ENCODE measurements at regions of chr19 and their contacts with region 1.

Region 1: GRCh38 chr19:6737284-6738046 is at the start of gene GPR108:
- DNase-seq: peak; percentile 100
- ATAC-seq: peak; percentile 81
- H3K4me3 Mint-ChIP-seq: peak within 1 kb of the TSS; percentile 89
- H3K27ac Mint-ChIP-seq: peak within 1 kb of the TSS; percentile 98
- H3K4me1 Mint-ChIP-seq: peaks cover 39% of the 10 kb centered on the region
- H3K27me3 Mint-ChIP-seq: no peaks in the 10 kb centered on the region
- total RNA-seq, gene GPR108: 58.8 to 59.9 TPM

Region 2: GRCh38 chr19:6372594-6373095 is 364.8 kb before region 1 on chr19 and contains the start of gene ALKBH7:
- CTCF ChIA-PET with region 1: no interaction called
- POLR2A ChIA-PET with region 1: no interaction called
- intact Hi-C with region 1: loop called in 1 of 2 experiments (anchors 1 kb)
- DNase-seq: peak; percentile 98
- ATAC-seq: peak; percentile 84
- H3K4me3 Mint-ChIP-seq: peak within 1 kb of the TSS; percentile 80
- H3K27ac Mint-ChIP-seq: peak within 1 kb of the TSS; percentile 92
- H3K4me1 Mint-ChIP-seq: peaks cover 11% of the 10 kb centered on the region
- H3K27me3 Mint-ChIP-seq: no peaks in the 10 kb centered on the region
- total RNA-seq, gene ALKBH7: 22.8 to 44.7 TPM

Region 3: DNA sequence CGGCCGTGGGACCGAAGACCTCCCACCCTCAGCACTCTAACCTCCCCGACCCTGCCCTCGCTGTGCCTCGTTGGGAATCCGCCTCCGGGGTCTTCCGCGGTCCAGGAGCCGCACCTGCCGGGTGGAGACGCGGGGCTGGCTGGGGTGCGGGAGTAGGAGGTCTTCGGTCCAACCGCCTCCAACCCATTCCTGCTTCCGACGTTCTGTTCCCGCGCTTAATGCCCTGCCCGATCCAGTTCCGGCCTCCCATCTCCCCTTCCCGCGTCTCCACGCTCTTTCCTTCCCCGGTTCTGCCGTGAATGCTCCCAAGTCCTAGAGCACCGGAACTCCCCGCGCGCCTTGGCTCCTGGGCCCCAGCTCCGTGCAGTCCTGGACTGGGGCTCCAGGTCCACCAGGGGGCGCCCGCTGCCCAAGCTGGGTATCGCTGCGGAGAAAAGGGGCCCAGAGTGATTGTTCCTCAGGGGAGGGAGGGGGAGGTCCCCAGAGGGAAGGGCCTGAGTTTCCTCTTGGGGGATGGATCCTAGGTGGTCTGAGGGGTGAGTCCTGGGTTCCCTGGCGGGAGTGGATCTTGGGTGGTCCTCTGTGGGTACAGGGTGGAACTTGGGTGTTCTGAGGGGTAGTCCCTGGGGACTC is 220.7 kb before region 1 on chr19:
- CTCF ChIA-PET with region 1: interaction called, 8 read pairs
- POLR2A ChIA-PET with region 1: interaction called, 4 read pairs
- intact Hi-C with region 1: loop called (anchors 1 kb)
- DNase-seq: peak; percentile 97
- ATAC-seq: peak; percentile 86
- H3K4me3 Mint-ChIP-seq: peak overlapping the region; percentile 79
- H3K27ac Mint-ChIP-seq: peak overlapping the region; percentile 92
- H3K4me1 Mint-ChIP-seq: peaks cover 34% of the 10 kb centered on the region
- H3K27me3 Mint-ChIP-seq: peaks cover 2% of the 10 kb centered on the region

Region 4: GRCh38 chr19:6674868-6675305 is 62.6 kb before region 1 on chr19:
- CTCF ChIA-PET with region 1: interaction called, 5 read pairs
- POLR2A ChIA-PET with region 1: no interaction called
- intact Hi-C with region 1: loop called in 1 of 2 experiments (anchors 1 kb)
- DNase-seq: peak; percentile 97
- ATAC-seq: peak; percentile 61
- H3K4me3 Mint-ChIP-seq: peak overlapping the region; percentile 57
- H3K27ac Mint-ChIP-seq: peak overlapping the region; percentile 93
- H3K4me1 Mint-ChIP-seq: peaks cover 75% of the 10 kb centered on the region
- H3K27me3 Mint-ChIP-seq: no peaks in the 10 kb centered on the region

Region 5: DNA sequence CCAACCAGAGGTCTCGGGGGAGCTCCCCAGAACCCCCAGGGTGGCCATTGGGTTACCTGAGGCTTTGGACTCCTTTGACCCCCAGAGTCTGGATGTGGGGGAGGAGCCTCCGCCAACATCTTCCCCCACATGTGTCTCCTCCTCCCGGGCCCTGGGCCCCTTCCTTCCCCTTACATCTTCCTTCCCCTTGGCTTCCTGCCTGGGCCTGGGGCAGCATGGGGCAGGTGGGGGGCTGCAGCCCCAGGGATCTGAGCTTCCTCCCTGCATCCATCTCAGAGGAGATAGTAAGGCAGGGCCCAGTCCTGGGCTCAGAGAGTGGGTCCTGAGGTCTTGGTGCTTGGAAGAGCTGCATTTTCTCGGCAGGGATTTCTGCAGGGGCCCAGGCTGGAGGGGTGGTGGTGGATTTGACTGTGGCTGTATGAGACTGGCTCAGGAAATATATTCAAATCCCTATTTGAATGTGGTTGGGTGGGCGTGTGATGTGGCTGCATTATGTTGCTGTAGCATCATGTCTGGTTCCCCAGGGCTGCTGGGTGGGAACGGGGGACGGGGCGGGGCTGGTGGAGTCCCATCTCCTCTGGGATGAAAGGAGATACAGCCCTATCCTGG is 36.0 kb after region 1 on chr19:
- CTCF ChIA-PET with region 1: interaction called, 12 read pairs
- POLR2A ChIA-PET with region 1: interaction called, 3 read pairs
- intact Hi-C with region 1: loop called (anchors 1 kb)
- DNase-seq: peak; percentile 84
- ATAC-seq: peak; percentile 50
- H3K4me3 Mint-ChIP-seq: peak overlapping the region; percentile 97
- H3K27ac Mint-ChIP-seq: peak overlapping the region; percentile 98
- H3K4me1 Mint-ChIP-seq: peaks cover 54% of the 10 kb centered on the region
- H3K27me3 Mint-ChIP-seq: no peaks in the 10 kb centered on the region

Region 6: GRCh38 chr19:7098701-7099596 is 361.5 kb after region 1 on chr19:
- CTCF ChIA-PET with region 1: no interaction called
- POLR2A ChIA-PET with region 1: interaction called, 3 read pairs
- intact Hi-C with region 1: loop called in 1 of 2 experiments (anchors 1 kb)
- DNase-seq: peak; percentile 94
- ATAC-seq: peak; percentile 95
- H3K4me3 Mint-ChIP-seq: peak overlapping the region; percentile 90
- H3K27ac Mint-ChIP-seq: peak overlapping the region; percentile 92
- H3K4me1 Mint-ChIP-seq: peaks cover 27% of the 10 kb centered on the region
- H3K27me3 Mint-ChIP-seq: no peaks in the 10 kb centered on the region

Measured in activated CD4-positive, alpha-beta T cell treated with anti-CD3 and anti-CD28 coated beads for 36 hours (primary cell).